H1 (cell line): ENCODE measurements at regions of chr7 and their contacts with region 1.

Region 1: GRCh38 chr7:101542527-101543241 is 86.4 kb downstream of the MYL10 start:
- DNase-seq: peak; percentile 56 to 99
- H3K4me3 ChIP-seq: no peak overlapping the region
- H3K27ac ChIP-seq: no peak overlapping the region
- H3K4me1 ChIP-seq: peaks cover 0 to 2% (median under 1%) of the 10 kb centered on the region in 4 experiments; a peak in 2 of 7 replicates
- H3K27me3 ChIP-seq: no peaks in the 10 kb centered on the region
- CTCF ChIP-seq: peak; percentile 85 to 98 (median 87)
- EP300 ChIP-seq: no peak
- POLR2A ChIP-seq: no peak
- RAD21 ChIP-seq: peak; percentile 94 to 96

Region 2: GRCh38 chr7:101527844-101528667 is 14.6 kb before region 1 on chr7:
- CTCF ChIA-PET with region 1: interaction called, 10 read pairs
- POLR2A ChIA-PET with region 1: no interaction called
- DNase-seq: no peak
- H3K4me3 ChIP-seq: no peak overlapping the region
- H3K27ac ChIP-seq: no peak overlapping the region
- H3K4me1 ChIP-seq: no peaks in the 10 kb centered on the region
- H3K27me3 ChIP-seq: no peaks in the 10 kb centered on the region
- CTCF ChIP-seq: no peak
- EP300 ChIP-seq: no peak
- POLR2A ChIP-seq: no peak
- RAD21 ChIP-seq: no peak

Region 3: DNA sequence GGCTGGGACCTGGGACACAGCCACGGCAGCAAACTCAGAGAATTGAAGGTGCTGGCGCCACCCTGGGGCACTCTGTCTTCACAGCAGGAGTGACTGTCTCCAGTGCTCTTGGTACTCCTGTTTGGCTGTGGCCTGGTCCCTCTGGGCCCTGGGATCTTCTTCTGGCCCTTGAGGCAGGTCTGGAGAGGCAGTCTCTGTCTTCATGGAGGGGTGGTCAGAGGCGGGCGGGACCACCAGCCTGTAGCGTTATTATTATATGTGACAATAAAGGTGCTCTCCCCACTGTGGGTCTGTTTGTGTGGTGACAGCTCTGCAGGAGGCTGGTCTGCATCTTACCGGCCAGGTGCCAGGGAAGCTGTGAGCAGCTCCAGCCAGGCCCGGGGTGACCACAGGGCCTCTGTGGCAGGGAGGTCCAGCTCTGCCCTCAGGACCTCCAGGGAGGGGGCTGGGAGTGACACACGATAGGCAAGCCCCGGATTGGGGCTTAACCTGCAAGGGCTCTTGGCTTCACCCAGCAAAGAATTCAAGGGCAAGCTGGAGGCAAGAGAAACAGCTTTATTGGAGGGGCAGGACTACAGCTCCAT is 16.1 kb after region 1 on chr7:
- CTCF ChIA-PET with region 1: interaction called, 24 read pairs
- POLR2A ChIA-PET with region 1: interaction called, 5 read pairs
- DNase-seq: no peak
- H3K4me3 ChIP-seq: no peak overlapping the region
- H3K27ac ChIP-seq: no peak overlapping the region
- H3K4me1 ChIP-seq: peaks cover 0 to 3% (median 0%) of the 10 kb centered on the region in 4 experiments; a peak in 3 of 7 replicates
- H3K27me3 ChIP-seq: no peaks in the 10 kb centered on the region
- CTCF ChIP-seq: peak in 2 of 3 experiments; percentile 6 to 20; a peak in 2 of 4 replicates
- EP300 ChIP-seq: no peak
- POLR2A ChIP-seq: no peak
- RAD21 ChIP-seq: peak in 1 of 2 experiments; percentile 42; a peak in 3 of 4 replicates

Region 4: DNA sequence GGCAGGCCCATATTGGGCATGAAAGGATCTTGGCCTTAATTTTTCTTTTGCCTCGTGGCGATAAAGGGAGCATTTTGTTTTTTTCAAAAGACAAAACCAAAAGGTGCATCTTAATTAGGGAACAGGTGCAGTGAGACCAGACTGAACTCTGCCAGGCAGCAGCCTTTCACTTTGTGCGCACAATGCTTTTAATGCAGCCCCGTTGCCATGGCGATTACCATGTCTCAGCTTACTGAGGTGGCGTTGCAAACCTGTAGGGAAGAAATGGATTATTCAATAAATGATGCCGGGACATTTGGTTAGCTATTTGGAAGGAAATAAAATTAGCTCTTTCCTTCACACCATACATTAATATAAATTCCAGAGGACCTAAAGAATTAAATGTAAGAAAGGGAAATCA is 24.5 kb after region 1 on chr7:
- CTCF ChIA-PET with region 1: interaction called, 15 read pairs
- POLR2A ChIA-PET with region 1: interaction called, 3 read pairs
- DNase-seq: no peak
- H3K4me3 ChIP-seq: no peak overlapping the region
- H3K27ac ChIP-seq: no peak overlapping the region
- H3K4me1 ChIP-seq: peaks cover 0 to 15% (median 7%) of the 10 kb centered on the region in 4 experiments; a peak in 6 of 7 replicates
- H3K27me3 ChIP-seq: no peaks in the 10 kb centered on the region
- CTCF ChIP-seq: no peak
- EP300 ChIP-seq: no peak
- POLR2A ChIP-seq: no peak
- RAD21 ChIP-seq: no peak

Region 5: DNA sequence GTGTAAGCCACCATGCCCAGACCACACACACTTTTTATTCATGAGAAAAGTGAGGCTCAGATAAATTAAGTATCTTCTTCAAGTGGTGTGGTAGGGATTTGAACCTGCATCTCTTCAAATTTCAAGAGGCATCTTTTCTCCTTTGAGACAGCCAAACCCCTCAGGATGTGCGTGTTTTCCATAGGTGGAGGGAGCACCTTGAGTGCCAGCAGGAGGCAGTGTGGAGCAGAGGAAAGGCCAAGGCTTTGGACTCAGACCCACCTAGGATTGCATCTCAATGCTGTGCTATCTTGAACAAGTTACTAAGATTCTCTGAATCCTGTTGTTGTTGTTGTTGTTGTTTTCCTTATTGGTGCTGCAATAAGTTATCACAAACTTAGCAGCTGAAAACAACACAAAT is 126.6 kb after region 1 on chr7:
- CTCF ChIA-PET with region 1: interaction called, 13 read pairs
- POLR2A ChIA-PET with region 1: no interaction called
- DNase-seq: no peak
- H3K4me3 ChIP-seq: no peak overlapping the region
- H3K27ac ChIP-seq: no peak overlapping the region
- H3K4me1 ChIP-seq: peaks cover 0 to 12% (median 6%) of the 10 kb centered on the region in 4 experiments; a peak in 6 of 7 replicates
- H3K27me3 ChIP-seq: no peaks in the 10 kb centered on the region
- CTCF ChIP-seq: peak; percentile 50 to 77 (median 70)
- EP300 ChIP-seq: no peak
- POLR2A ChIP-seq: no peak
- RAD21 ChIP-seq: peak; percentile 33 to 63; a peak in 3 of 4 replicates